Caco-2 (cell line): ENCODE measurements at regions of chr4 and their contacts with region 1.

Region 1: GRCh38 chr4:95095348-95095974 is 337.7 kb downstream of the BMPR1B start:
- DNase-seq: peak in 1 of 2 experiments; percentile 55
- H3K4me3 ChIP-seq: no peak overlapping the region
- H3K4me3 Mint-ChIP-seq: no peak overlapping the region
- H3K27ac Mint-ChIP-seq: no peak overlapping the region
- H3K4me1 ChIP-seq: no peaks in the 10 kb centered on the region
- H3K4me1 Mint-ChIP-seq: peaks cover 14% of the 10 kb centered on the region
- H3K27me3 ChIP-seq: no peaks in the 10 kb centered on the region
- H3K27me3 Mint-ChIP-seq: no peaks in the 10 kb centered on the region
- CTCF ChIP-seq: peak; percentile 66 to 67

Region 2: GRCh38 chr4:94621491-94622080 is 473.9 kb before region 1 on chr4:
- CTCF ChIA-PET with region 1: interaction called, 3 read pairs
- POLR2A ChIA-PET with region 1: no interaction called
- intact Hi-C with region 1: loop called (anchors 1 kb)
- DNase-seq: peak in 1 of 2 experiments; percentile 47
- H3K4me3 ChIP-seq: no peak overlapping the region
- H3K4me3 Mint-ChIP-seq: no peak overlapping the region
- H3K27ac Mint-ChIP-seq: no peak overlapping the region
- H3K4me1 ChIP-seq: no peaks in the 10 kb centered on the region
- H3K4me1 Mint-ChIP-seq: peaks cover 13% of the 10 kb centered on the region
- H3K27me3 ChIP-seq: no peaks in the 10 kb centered on the region
- H3K27me3 Mint-ChIP-seq: no peaks in the 10 kb centered on the region
- CTCF ChIP-seq: peak; percentile 53 to 57

Region 3: GRCh38 chr4:94746750-94747149 is 348.7 kb before region 1 on chr4:
- CTCF ChIA-PET with region 1: no interaction called
- POLR2A ChIA-PET with region 1: no interaction called
- intact Hi-C with region 1: loop called (anchors 1 kb)
- DNase-seq: no peak
- H3K4me3 ChIP-seq: no peak overlapping the region
- H3K4me3 Mint-ChIP-seq: no peak overlapping the region
- H3K27ac Mint-ChIP-seq: no peak overlapping the region
- H3K4me1 ChIP-seq: no peaks in the 10 kb centered on the region
- H3K4me1 Mint-ChIP-seq: peaks cover 6% of the 10 kb centered on the region
- H3K27me3 ChIP-seq: no peaks in the 10 kb centered on the region
- H3K27me3 Mint-ChIP-seq: no peaks in the 10 kb centered on the region
- CTCF ChIP-seq: no peak

Region 4: DNA sequence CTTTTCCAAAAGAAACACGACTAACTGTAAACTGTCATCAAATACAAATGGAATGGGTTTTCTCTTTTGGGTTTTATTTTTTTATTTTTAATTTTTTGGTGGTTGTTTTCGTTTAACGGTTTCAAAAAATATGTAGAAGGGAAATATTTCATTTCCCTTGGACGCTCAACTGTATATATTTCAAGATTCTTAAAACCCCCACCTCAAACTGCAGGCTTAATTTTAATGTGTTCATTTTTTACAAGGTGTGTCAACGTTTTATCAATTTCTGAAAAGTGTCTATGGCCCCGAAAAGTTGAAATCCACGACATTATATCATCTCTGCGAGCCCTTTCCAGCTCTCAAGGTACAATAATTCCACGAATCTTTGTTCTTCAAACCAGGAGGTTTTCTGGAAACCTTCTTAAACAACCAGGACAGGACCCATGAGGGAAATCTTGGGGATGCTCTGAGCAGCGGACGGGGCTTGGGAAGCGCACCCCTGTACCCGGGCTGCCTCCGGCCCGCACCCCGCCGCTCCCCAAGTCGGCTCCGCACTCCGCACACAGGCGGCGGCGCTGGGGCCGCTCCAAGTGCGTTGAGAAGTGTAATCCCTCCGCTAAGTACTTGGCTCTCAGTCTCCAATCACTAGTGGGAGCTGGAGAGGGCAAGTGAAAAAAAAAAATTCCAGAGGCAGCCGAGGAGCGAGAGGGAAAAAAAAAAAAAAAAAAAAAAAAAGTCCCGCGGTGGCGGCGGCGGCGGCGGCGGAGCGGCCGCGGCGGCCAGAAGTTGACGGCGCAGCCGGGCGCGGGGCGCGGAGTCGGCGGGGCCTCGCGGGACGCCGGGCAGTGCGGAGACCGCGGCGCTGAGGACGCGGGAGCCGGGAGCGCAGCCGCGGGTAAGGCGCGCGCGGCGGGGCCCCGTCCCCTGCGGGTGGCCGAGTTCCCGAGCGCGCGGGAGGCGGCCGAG is 338.0 kb before region 1 on chr4 and contains the start of gene BMPR1B:
- CTCF ChIA-PET with region 1: no interaction called
- POLR2A ChIA-PET with region 1: no interaction called
- intact Hi-C with region 1: loop called (anchors 2 kb)
- DNase-seq: peak in 1 of 2 experiments; percentile 56
- H3K4me3 ChIP-seq: peak within 1 kb of the TSS; percentile 56
- H3K4me3 Mint-ChIP-seq: peak within 1 kb of the TSS; percentile 85
- H3K27ac Mint-ChIP-seq: peak within 1 kb of the TSS; percentile 39
- H3K4me1 ChIP-seq: no peaks in the 10 kb centered on the region
- H3K4me1 Mint-ChIP-seq: peaks cover 15% of the 10 kb centered on the region
- H3K27me3 ChIP-seq: no peaks in the 10 kb centered on the region
- H3K27me3 Mint-ChIP-seq: peaks cover 8% of the 10 kb centered on the region
- CTCF ChIP-seq: peak in 1 of 2 experiments; percentile 23
- total RNA-seq, gene BMPR1B: 8.7 and 9.9 TPM in 2 replicates

Region 5: GRCh38 chr4:95013236-95013635 is 82.2 kb before region 1 on chr4:
- CTCF ChIA-PET with region 1: no interaction called
- POLR2A ChIA-PET with region 1: no interaction called
- intact Hi-C with region 1: loop called (anchors 1 kb)
- DNase-seq: no peak
- H3K4me3 ChIP-seq: no peak overlapping the region
- H3K4me3 Mint-ChIP-seq: no peak overlapping the region
- H3K27ac Mint-ChIP-seq: no peak overlapping the region
- H3K4me1 ChIP-seq: peaks cover 10% of the 10 kb centered on the region
- H3K4me1 Mint-ChIP-seq: peaks cover 12% of the 10 kb centered on the region
- H3K27me3 ChIP-seq: no peaks in the 10 kb centered on the region
- H3K27me3 Mint-ChIP-seq: no peaks in the 10 kb centered on the region
- CTCF ChIP-seq: no peak